ENCODE measurements at regions of chr2 and their contacts with region 1.

Region 1: GRCh38 chr2:3986063-3986462 is 282.7 kb downstream of the DCDC2C start:
- DNase-seq: no peak
- H3K4me3 ChIP-seq: no peak overlapping the region
- H3K27ac ChIP-seq: no peak overlapping the region
- H3K4me1 ChIP-seq: no peaks in the 10 kb centered on the region
- H3K27me3 ChIP-seq: no peaks in the 10 kb centered on the region
- CTCF ChIP-seq: no peak
- POLR2A ChIP-seq: no peak

Region 2: DNA sequence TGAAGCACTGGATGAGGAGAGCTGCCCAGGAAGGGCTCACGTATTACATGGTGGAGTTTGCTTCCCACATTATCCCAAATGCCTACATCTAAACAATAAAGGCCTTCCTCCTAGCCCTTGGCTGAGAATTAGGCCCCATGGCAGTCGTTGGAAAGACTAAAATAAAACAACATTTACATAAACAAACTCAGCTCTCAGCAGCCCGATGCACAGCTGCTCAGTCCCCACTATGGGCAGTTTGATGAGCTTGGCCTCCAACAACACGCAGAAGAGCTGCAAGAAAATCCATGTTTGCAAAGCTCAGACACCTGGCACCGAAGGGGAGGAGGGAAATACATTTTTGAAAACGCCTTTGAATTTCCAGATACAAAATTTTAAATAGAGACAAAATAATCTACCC is 960.8 kb before region 1 on chr2:
- intact Hi-C with region 1: no loop called
- DNase-seq: no peak
- H3K4me3 ChIP-seq: no peak overlapping the region
- H3K27ac ChIP-seq: no peak overlapping the region
- H3K4me1 ChIP-seq: no peaks in the 10 kb centered on the region
- H3K27me3 ChIP-seq: no peaks in the 10 kb centered on the region
- CTCF ChIP-seq: no peak
- POLR2A ChIP-seq: no peak

Region 3: DNA sequence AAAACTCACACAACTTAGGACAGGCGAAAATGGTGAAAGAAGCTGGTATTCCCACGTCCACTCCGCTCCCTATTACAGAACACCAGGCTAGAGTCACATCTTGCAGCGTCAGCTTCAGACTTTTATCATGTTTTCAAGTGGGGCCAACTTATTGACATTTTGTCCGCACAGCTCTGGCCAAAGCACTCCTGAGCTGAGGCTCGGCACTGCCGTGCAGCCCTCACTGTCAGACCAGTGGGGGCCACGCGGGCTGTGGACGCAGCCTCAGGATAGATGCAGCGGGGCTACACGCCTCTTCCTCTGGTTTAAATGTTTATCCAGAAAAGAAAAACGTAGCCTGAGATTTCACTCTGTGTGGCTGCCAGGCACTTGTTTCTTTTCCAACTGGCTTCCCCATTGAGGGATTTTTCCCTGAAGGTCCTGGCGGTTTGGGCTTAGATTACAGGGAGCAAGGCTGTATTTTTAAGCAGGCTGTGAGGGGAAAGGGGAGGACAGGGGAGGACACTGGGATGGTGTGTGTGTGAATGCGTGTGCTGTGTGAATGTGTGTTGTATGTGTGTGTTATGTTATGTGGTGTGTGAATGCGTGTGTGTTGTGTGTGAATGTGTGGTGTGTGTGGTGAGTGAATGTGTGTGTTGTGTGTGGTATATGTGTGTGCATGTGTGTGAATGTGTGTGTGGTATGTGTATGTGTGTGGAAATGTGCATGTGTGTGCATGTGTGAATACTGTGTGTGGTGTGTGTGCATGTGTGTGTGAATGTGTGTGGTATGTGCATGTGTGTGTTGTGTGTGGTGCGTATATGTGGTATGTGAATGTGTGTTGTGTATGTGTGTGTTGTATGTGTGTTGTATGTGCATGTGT is 15.0 kb before region 1 on chr2:
- intact Hi-C with region 1: loop called (anchors 1 kb)
- DNase-seq: no peak
- H3K4me3 ChIP-seq: no peak overlapping the region
- H3K27ac ChIP-seq: no peak overlapping the region
- H3K4me1 ChIP-seq: no peaks in the 10 kb centered on the region
- H3K27me3 ChIP-seq: peaks cover 0 to 19% of the 10 kb centered on the region in 2 donors
- CTCF ChIP-seq: no peak
- POLR2A ChIP-seq: no peak